Endothelial cell of umbilical vein (primary cell): ENCODE measurements at regions of chr5 and their contacts with region 1.

Region 1: DNA sequence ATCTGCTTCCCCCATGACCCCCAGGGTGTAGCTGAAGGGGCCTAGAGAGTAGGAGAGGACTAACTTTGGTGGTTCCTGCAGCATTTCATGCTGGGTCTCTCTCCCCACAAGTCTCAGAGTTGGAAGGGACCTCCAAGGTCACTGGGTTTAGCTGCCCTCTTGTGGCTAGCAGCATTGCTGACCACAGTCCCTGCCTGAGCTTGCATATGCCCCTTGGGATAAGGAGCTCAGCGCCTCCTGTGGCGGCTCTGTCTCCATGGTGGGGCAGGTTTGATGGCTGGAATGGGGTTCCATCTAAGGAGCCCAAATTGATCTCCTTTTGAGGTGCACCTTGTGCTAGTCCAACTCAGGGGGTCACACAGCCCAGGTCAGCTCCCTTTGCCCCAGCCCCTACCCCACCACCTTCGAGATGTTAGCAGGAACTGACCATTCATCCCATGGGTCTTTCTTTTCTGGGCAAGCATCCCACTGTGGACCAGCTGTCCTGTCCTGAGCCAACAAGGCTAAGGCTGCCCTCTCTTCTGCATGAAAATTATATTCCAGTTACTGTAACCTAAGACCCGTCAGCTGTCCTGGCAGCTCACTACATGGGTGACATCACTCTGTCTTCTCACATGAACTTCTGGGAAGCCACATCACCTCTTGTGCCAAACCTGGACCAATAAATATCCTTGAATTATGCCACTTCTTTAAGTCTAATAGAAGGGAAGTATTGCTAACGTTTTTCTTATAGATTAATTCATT is 196.2 kb downstream of the HSPA4 start:
- DNase-seq: peak; percentile 87
- H3K4me3 ChIP-seq: no peak overlapping the region
- H3K27ac ChIP-seq: no peak overlapping the region
- H3K4me1 ChIP-seq: peaks cover 3% of the 10 kb centered on the region
- H3K27me3 ChIP-seq: no peaks in the 10 kb centered on the region
- CTCF ChIP-seq: peak; percentile 83 to 98
- POLR2A ChIP-seq: no peak

Region 2: GRCh38 chr5:132988124-132988408 is 260.0 kb before region 1 on chr5:
- CTCF ChIA-PET with region 1: no interaction called
- POLR2A ChIA-PET with region 1: no interaction called
- dilution Hi-C with region 1: no loop called
- intact Hi-C with region 1: no loop called
- DNase-seq: no peak
- H3K4me3 ChIP-seq: no peak overlapping the region
- H3K27ac ChIP-seq: no peak overlapping the region
- H3K4me1 ChIP-seq: no peaks in the 10 kb centered on the region
- H3K27me3 ChIP-seq: peaks cover 0 to 2% of the 10 kb centered on the region in 2 experiments
- CTCF ChIP-seq: no peak
- POLR2A ChIP-seq: no peak

Region 3: GRCh38 chr5:133123297-133123696 is 124.8 kb before region 1 on chr5:
- CTCF ChIA-PET with region 1: interaction called, 28 read pairs
- POLR2A ChIA-PET with region 1: no interaction called
- dilution Hi-C with region 1: no loop called
- intact Hi-C with region 1: no loop called
- DNase-seq: no peak
- H3K4me3 ChIP-seq: no peak overlapping the region
- H3K27ac ChIP-seq: no peak overlapping the region
- H3K4me1 ChIP-seq: no peaks in the 10 kb centered on the region
- H3K27me3 ChIP-seq: peaks cover 0 to 2% of the 10 kb centered on the region in 2 experiments
- CTCF ChIP-seq: no peak
- POLR2A ChIP-seq: no peak

Region 4: GRCh38 chr5:133154274-133155074 is 93.6 kb before region 1 on chr5:
- CTCF ChIA-PET with region 1: interaction called, 22 read pairs
- POLR2A ChIA-PET with region 1: no interaction called
- dilution Hi-C with region 1: no loop called
- intact Hi-C with region 1: no loop called
- DNase-seq: no peak
- H3K4me3 ChIP-seq: no peak overlapping the region
- H3K27ac ChIP-seq: no peak overlapping the region
- H3K4me1 ChIP-seq: no peaks in the 10 kb centered on the region
- H3K27me3 ChIP-seq: no peaks in the 10 kb centered on the region
- CTCF ChIP-seq: no peak
- POLR2A ChIP-seq: no peak

Region 5: DNA sequence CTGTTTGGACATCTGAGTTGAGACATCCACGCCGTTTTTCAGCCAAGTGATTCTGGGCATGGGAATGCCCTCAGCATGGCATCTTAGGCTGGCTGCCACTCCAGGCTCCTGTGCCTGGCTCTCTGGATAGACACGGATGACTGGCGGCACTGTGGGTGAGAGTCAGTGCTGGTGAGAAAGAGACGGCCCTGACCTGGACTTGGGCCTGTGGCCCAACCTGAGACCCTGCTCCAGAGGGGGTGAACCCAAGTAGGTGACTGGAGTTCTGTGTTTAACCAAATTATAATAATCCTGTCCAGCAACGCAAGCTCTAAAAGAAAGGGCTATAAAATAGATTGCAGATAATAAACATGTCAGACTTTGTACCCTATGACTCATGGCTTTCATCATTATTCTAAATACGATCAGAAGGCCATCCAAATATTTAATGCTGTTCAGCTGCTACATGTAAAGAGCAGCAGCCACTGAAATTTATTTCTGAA is 22.3 kb before region 1 on chr5:
- CTCF ChIA-PET with region 1: interaction called, 19 read pairs
- POLR2A ChIA-PET with region 1: no interaction called
- dilution Hi-C with region 1: no loop called
- intact Hi-C with region 1: no loop called
- DNase-seq: peak; percentile 28
- H3K4me3 ChIP-seq: no peak overlapping the region
- H3K27ac ChIP-seq: no peak overlapping the region
- H3K4me1 ChIP-seq: peaks cover 7% of the 10 kb centered on the region
- H3K27me3 ChIP-seq: no peaks in the 10 kb centered on the region
- CTCF ChIP-seq: no peak
- POLR2A ChIP-seq: no peak

Region 6: DNA sequence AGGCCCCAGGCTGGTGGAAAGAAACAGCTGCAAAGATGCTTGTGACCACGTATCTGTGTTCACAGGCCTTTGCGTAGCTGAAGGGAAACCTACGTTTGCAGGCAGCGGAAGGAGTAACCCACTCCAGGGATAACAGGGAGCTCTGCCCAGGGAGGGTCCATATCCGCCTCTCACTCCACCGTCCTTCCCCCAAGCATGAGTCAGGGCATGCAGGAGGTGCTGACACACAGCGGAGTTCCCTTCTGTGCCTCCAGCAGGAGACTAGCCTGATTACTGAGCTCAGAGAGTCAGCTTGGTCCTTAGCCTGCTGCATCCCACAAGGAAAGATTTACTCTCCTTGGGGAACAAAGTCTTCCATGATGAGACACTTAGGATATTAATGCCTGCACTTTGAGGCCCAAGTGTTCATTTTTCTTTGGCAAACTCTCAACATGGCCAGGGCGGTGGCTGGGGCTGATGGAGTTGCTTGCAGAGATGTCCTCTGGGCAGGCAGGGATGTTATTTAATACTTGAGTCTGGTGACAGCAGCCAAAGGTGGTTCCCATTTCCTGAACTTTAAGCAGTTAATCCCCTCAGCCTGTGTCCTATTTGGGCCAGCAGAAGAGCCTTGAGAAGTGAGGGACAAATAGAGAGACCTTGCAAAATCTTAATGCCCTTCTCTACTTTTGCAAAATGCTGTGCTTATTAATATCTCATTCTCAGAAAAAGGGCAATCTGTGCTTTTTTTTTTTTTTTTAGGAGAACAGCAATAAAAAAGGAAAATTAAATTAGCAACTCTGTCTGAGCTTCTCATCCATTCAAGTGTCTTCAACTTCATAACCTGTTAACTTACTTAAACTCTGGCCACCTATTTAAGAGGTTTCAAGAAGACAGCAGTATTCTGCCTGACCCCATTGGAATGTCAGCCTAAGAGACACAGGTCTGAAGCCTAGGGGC is 25.9 kb after region 1 on chr5:
- CTCF ChIA-PET with region 1: interaction called, 10 read pairs
- POLR2A ChIA-PET with region 1: no interaction called
- dilution Hi-C with region 1: no loop called
- intact Hi-C with region 1: no loop called
- DNase-seq: no peak
- H3K4me3 ChIP-seq: no peak overlapping the region
- H3K27ac ChIP-seq: no peak overlapping the region
- H3K4me1 ChIP-seq: no peaks in the 10 kb centered on the region
- H3K27me3 ChIP-seq: no peaks in the 10 kb centered on the region
- CTCF ChIP-seq: no peak
- POLR2A ChIP-seq: no peak